ENCODE measurements at regions of chr19 and their contacts with region 1.

Region 1: GRCh38 chr19:7149956-7150705 is 80.6 kb downstream of the ZNF557 start:
- DNase-seq: peak; percentile 19
- H3K4me3 ChIP-seq: no peak overlapping the region
- H3K27ac ChIP-seq: no peak overlapping the region
- H3K4me1 ChIP-seq: no peaks in the 10 kb centered on the region
- H3K27me3 ChIP-seq: no peaks in the 10 kb centered on the region
- CTCF ChIP-seq: no peak
- EP300 ChIP-seq: no peak
- RAD21 ChIP-seq: no peak

Region 2: DNA sequence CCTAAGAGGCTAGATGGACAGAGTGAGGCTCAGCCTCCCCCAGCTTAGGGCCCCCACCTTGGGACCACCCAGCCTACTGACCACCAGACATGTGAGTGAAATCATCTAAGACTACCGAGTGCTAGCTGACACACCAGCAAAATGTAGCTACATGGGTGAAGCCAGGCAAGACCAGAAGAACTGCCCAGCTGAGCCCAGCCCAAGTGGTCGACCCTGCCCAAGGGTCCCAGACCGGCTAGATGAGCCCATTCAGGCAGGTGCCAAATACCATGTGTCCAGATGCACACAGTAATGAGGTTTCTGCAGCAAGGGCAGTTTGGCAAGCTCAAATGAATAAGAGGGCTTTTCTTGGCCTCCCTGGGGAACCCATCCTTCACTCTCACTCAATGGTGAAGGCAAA is 24.0 kb before region 1 on chr19:
- CTCF ChIA-PET with region 1: no interaction called
- POLR2A ChIA-PET with region 1: no interaction called
- DNase-seq: no peak
- H3K4me3 ChIP-seq: no peak overlapping the region
- H3K27ac ChIP-seq: no peak overlapping the region
- H3K4me1 ChIP-seq: no peaks in the 10 kb centered on the region
- H3K27me3 ChIP-seq: no peaks in the 10 kb centered on the region
- CTCF ChIP-seq: no peak
- EP300 ChIP-seq: no peak
- RAD21 ChIP-seq: no peak

Region 3: GRCh38 chr19:7137120-7137519 is 13.0 kb before region 1 on chr19:
- CTCF ChIA-PET with region 1: interaction called, 16 read pairs
- POLR2A ChIA-PET with region 1: interaction called, 3 read pairs
- DNase-seq: no peak
- H3K4me3 ChIP-seq: no peak overlapping the region
- H3K27ac ChIP-seq: no peak overlapping the region
- H3K4me1 ChIP-seq: no peaks in the 10 kb centered on the region
- H3K27me3 ChIP-seq: no peaks in the 10 kb centered on the region
- CTCF ChIP-seq: no peak
- EP300 ChIP-seq: no peak
- RAD21 ChIP-seq: no peak

Region 4: DNA sequence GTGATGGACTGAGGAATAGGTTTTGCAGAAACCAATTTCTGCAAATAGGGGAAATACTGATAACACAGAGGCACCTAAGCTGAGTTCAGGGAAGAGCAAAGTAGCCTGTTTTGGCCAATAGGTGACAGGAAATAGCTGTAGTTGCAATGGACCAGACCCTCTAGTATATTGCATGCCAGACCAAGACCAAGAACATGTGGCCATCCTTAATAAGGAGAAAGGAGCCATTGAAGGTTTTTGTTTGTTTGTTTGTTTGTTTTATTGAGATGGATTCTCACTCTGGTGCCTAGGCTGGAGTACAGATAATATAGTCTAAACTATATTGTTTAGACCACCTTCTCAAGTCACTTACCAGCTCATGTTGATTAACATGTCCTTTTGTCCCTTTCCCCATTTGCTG is 20.9 kb after region 1 on chr19:
- CTCF ChIA-PET with region 1: interaction called, 13 read pairs
- POLR2A ChIA-PET with region 1: no interaction called
- DNase-seq: no peak
- H3K4me3 ChIP-seq: no peak overlapping the region
- H3K27ac ChIP-seq: no peak overlapping the region
- H3K4me1 ChIP-seq: no peaks in the 10 kb centered on the region
- H3K27me3 ChIP-seq: no peaks in the 10 kb centered on the region
- CTCF ChIP-seq: no peak
- EP300 ChIP-seq: no peak
- RAD21 ChIP-seq: no peak

Region 5: DNA sequence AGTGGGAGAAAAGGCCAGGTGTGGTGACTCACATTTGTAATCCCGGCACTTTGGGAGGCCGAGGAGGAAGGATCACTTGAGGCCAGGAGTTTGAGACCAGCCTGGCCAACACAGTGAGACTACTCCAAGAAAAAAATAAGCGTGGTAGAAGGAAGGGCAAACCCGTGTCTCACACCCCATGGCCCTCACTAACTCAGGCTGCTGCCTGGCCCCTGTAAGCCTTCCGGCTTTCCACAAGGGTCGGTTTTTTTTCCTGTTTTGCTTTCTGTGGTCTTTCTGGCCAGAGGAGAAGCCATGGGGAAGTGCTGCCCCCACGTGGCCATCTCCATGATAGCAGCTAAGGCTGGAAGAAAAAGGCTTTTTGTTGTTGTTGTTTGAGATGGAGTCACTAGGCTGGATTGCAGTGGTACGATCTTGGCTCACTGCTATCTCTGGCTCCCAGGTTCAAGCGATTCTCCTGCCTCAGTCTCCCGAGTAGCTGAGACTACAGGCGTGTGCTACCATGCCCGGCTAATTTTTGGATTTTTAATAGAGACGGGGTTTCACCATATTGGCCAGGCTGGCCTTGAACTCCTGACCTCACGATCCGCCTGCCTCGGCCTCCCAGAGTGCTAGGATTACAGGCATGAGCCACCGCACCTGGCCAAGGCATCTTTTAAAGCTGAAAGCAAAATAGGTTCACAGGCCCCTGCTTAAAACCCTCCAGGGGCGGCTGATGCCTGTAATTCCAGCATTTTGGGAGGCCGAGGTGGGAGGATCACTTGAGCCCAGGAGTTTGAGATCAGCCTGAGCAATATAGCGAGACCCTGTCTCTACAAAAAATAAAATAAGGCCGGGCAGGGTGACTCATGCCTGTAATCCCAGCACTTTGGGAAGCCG is 191.1 kb after region 1 on chr19:
- CTCF ChIA-PET with region 1: interaction called, 45 read pairs
- POLR2A ChIA-PET with region 1: no interaction called
- DNase-seq: peak; percentile 71
- H3K4me3 ChIP-seq: peak overlapping the region in 1 of 2 experiments; percentile 18; a peak in 1 of 4 replicates
- H3K27ac ChIP-seq: no peak overlapping the region
- H3K4me1 ChIP-seq: no peaks in the 10 kb centered on the region
- H3K27me3 ChIP-seq: peaks cover 21% of the 10 kb centered on the region
- CTCF ChIP-seq: peak; percentile 93
- EP300 ChIP-seq: no peak
- RAD21 ChIP-seq: peak; percentile 97